ENCODE measurements at regions of chr1 and their contacts with region 1.

Region 1: DNA sequence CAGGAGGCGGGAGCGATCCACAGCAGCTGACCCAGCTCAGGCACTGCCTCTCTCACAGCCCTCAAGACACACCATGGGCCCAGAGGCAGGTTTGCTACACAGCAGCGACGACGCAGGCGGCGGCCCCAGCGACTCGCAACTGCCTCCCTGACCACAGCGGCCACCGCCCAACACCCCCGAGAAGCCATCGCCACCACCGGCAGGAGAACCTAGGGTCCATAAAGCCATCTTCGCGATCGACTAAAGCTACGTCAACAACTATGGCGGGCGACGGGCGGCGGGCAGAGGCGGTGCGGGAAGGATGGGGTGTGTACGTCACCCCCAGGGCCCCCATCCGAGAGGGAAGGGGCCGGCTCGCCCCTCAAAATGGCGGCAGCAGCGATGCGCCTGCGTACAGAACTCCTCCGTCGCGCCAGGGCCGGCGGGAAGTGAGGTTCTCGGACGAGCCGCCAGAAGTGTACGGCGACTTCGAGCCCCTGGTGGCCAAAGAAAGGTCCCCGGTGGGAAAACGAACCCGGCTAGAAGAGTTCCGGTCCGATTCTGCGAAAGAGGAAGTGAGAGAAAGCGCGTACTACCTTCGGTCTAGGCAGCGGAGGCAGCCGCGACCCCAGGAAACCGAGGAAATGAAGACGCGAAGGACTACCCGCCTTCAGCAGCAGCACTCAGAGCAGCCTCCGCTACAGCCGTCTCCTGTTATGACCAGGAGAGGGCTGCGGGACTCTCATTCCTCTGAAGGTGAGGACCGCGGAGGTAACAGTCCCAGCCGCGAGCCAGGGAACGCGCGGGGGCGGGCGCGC is at the start of gene TOR1AIP1:
- DNase-seq: peak; percentile 94
- ATAC-seq: peak; percentile 86
- H3K4me3 Mint-ChIP-seq: peak within 1 kb of the TSS; percentile 94
- H3K27ac Mint-ChIP-seq: peak within 1 kb of the TSS; percentile 99
- H3K4me1 Mint-ChIP-seq: peaks cover 31% of the 10 kb centered on the region
- H3K27me3 Mint-ChIP-seq: no peaks in the 10 kb centered on the region
- total RNA-seq, gene TOR1AIP1: 68.3 to 73.1 TPM

Region 2: GRCh38 chr1:179814546-179814838 is 67.9 kb before region 1 on chr1:
- POLR2A ChIA-PET with region 1: interaction called, 17 read pairs
- DNase-seq: no peak
- ATAC-seq: peak; percentile 41
- H3K4me3 Mint-ChIP-seq: peak overlapping the region; percentile 81
- H3K27ac Mint-ChIP-seq: no peak overlapping the region
- H3K4me1 Mint-ChIP-seq: peaks cover 15% of the 10 kb centered on the region
- H3K27me3 Mint-ChIP-seq: peaks cover 4% of the 10 kb centered on the region

Region 3: DNA sequence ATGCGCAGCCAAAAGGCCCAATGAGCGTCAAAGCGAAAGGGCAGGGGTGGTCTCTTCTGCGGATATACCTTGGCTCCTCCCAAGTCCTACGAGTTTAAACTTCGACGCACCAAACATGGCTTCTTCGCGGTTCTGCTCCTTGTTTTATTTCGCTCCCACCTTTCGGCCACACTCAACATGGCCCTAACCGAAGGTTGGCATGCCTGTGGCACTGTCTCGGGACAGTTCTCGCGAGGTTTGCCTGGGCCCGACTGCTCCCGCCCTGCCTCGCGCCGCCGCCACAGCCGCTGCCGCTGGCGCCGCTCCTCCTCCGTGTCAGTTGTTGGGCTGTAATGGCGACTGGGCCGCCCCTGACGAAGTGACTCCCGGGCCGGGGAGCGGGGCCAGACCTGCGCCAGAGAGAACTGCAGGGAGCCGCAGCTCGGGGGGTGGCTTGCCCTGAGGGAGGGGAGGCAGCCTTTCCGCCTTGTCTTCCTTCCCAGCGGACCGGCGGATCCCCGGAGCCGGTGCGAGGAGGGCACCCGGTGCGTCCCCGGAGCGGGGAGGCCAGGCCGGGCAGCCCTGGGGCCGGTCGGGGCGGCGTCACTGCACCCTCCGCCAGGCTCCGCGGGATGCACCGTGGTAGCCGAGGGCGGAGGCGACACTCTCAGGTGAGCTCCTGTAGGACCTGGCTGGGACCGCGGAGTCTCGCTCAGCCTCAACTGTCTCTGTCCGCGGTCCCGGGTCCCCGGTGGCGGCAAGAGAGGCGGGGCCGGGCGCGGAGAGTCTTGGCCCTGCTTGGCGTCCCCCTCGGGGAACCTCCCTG is 72.3 kb after region 1 on chr1 and contains the start of gene CEP350:
- POLR2A ChIA-PET with region 1: interaction called, 86 read pairs
- DNase-seq: peak; percentile 96
- ATAC-seq: peak; percentile 91
- H3K4me3 Mint-ChIP-seq: peak within 1 kb of the TSS; percentile 86
- H3K27ac Mint-ChIP-seq: peak within 1 kb of the TSS; percentile 98
- H3K4me1 Mint-ChIP-seq: peaks cover 33% of the 10 kb centered on the region
- H3K27me3 Mint-ChIP-seq: no peaks in the 10 kb centered on the region
- total RNA-seq, gene CEP350: 63.4 to 73.6 TPM

Region 4: GRCh38 chr1:180154325-180155181 is 272.1 kb after region 1 on chr1 and contains the start of gene QSOX1:
- POLR2A ChIA-PET with region 1: interaction called, 15 read pairs
- DNase-seq: peak; percentile 91
- ATAC-seq: peak; percentile 92
- H3K4me3 Mint-ChIP-seq: peak within 1 kb of the TSS; percentile 97
- H3K27ac Mint-ChIP-seq: peak within 1 kb of the TSS; percentile 92
- H3K4me1 Mint-ChIP-seq: peaks cover 34% of the 10 kb centered on the region
- H3K27me3 Mint-ChIP-seq: no peaks in the 10 kb centered on the region
- total RNA-seq, gene QSOX1: 22.8 to 27.1 TPM

Measured in activated naive CD8-positive, alpha-beta T cell treated with anti-CD3 and anti-CD28 coated beads, Interleukin-2, amount 10 ng/mL, durations not matched to agents 7 days and 5 days (primary cell).